Heart left ventricle (tissue), 16 donors: ENCODE measurements at regions of chr18 and their contacts with region 1.

Region 1: DNA sequence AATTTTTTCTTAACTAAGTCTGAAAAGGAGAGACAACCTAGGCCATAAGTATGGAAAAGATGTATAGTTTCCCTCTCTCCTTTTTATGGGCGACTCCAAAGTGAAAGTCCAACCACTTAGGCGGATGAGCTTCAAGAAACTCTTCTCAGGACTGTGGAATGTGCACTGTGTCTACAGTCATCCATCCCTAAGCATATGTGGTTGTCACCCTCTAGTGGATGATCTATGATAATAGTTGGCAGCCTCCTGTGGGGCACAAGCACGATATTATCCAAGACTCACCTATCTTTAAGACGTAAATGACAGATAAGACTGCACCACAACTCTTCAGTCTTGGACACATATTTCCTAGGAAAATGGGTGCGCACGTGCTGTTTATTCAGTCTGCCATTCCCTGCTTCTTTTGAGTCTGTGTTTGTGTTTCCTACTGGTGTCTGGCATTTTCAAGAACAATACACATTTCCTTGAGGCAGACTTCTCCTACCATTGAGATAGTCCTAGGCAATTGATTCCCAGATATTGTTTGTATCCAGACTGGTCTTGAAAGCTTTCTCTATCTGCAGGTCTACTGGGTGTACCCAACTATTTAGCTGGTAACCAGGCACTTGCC is 145.5 kb upstream of the CTAGE1 start:
- DNase-seq: peak in 2 of 5 donors; percentile 50 to 64
- ATAC-seq: peak; percentile 72 to 80 (median 76)
- H3K4me3 ChIP-seq: peak overlapping the region; percentile 10 to 65 (median 54)
- H3K27ac ChIP-seq: peak overlapping the region; percentile 91 to 99 (median 98)
- H3K4me1 ChIP-seq: peaks cover 0 to 24% (median 7%) of the 10 kb centered on the region in 12 donors
- H3K27me3 ChIP-seq: peaks cover 0 to 28% (median 0%) of the 10 kb centered on the region in 9 donors
- CTCF ChIP-seq: peak; percentile 60 to 85 (median 82)
- POLR2A ChIP-seq: peak in 1 of 2 donors; percentile 34

Region 2: DNA sequence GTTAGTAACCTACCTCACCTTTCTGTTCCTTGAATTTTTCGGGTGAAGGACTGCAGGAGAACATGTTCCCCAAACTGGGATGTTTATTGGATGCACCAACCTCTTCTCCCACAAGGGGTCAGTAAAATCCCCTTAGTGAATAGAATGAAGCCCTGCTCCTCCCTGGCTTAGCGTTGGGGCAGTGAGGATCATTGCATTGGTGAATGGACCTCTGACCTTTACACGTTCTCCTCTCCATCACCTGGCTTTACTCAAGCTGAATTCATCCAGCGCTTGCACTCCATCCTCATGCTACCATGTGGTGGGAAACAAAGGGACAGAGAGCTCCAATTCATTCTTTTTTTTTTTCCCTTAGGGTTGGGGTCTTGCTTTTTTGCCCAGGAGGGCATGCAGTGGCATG is 665.4 kb before region 1 on chr18:
- intact Hi-C with region 1: loop called in 3 of 10 experiments (anchors 1 to 5 kb)
- DNase-seq: peak in 3 of 5 donors; percentile 18 to 32 (median 22)
- ATAC-seq: peak; percentile 61 to 82 (median 80)
- H3K4me3 ChIP-seq: no peak overlapping the region
- H3K27ac ChIP-seq: no peak overlapping the region
- H3K4me1 ChIP-seq: peaks cover 0 to 7% (median 0%) of the 10 kb centered on the region in 12 donors
- H3K27me3 ChIP-seq: no peaks in the 10 kb centered on the region
- CTCF ChIP-seq: peak; percentile 59 to 79 (median 68)
- POLR2A ChIP-seq: no peak

Region 3: DNA sequence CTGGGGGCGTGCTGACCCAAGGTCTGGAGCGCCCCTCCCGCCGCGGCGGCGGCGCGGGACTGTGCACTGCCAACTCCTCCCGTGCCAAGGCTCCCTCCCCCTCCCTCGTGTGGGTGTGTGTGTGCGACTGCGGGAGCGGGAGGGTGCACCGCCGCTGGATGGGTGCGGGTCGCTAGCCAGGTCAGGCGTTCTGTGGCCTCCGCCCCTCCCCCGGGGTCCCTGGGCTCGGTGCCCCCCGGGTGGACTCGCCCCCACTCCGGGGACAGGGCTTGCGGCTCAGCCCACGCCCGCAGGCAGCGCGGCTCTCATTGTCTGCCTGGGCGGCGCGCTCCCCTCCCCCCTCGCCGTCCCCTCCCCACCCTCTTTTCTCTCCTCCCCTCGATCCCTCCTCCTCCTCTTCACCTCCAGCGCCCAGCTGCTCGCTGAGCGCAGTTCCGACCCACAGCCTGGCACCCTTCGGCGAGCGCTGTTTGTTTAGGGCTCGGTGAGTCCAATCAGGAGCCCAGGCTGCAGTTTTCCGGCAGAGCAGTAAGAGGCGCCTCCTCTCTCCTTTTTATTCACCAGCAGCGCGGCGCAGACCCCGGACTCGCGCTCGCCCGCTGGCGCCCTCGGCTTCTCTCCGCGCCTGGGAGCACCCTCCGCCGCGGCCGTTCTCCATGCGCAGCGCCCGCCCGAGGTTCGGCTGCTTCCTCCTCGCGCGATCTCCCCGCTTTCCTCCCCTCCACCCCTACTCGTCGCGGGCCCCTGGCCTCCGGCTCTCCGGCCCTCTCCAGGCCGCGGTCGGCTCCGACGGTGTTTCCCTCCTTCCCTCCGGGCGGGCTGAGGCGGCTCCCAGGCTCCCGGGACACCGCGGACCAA is 394.0 kb before region 1 on chr18 and contains the start of gene GATA6:
- intact Hi-C with region 1: loop called in 9 of 10 experiments (anchors 1 to 5 kb)
- DNase-seq: peak; percentile 90 to 96 (median 92)
- ATAC-seq: peak; percentile 74 to 85 (median 76)
- H3K4me3 ChIP-seq: peak within 1 kb of the TSS; percentile 66 to 99 (median 86)
- H3K27ac ChIP-seq: peak within 1 kb of the TSS; percentile 92 to 100 (median 98)
- H3K4me1 ChIP-seq: peaks cover 0 to 40% (median 8%) of the 10 kb centered on the region in 12 donors
- H3K27me3 ChIP-seq: peaks cover 0 to 75% (median 9%) of the 10 kb centered on the region in 9 donors
- CTCF ChIP-seq: peak in 9 of 12 donors; percentile 17 to 64 (median 47)
- POLR2A ChIP-seq: peak; percentile 50 to 91
- total RNA-seq, gene GATA6: 44.9 to 97.7 (median 76.3) TPM

Region 4: DNA sequence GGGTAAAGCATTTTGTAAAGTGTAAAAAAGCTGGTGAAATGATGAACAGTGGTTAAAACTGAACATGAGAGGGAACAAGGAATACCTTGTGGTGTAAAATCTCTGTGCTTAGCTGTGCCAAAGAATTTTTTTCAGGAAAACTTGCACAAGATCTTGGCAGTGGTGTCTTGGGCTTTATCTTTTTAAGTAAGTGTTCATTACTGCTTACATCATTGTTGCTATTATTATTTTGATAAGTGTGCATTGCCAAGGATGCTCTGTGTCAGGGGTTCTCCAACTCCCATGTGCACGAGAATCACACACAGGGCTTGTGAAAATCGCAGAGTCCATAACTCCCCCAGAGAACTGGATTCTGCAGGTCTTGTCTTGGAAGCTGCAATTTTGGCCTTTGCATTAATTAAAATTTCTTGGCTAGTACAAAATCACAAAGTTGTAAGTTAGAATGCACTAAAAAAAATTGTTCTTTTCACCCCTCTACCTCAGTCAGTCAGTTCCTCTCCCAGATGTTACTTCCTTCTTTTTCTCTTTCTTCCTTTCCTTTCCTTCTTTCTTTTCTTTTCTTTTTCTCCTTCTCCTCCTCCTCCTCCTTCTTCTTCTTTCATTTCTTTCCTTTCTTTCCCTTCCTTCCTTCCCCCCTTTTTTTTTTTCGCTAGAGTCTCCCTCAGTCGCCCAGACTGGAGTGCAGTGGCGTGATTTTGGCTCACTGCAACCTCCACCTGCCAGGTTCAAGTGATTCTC is 356.0 kb before region 1 on chr18:
- intact Hi-C with region 1: loop called in 1 of 10 experiments (anchors 10 kb)
- DNase-seq: no peak
- ATAC-seq: peak; percentile 34 to 75 (median 61)
- H3K4me3 ChIP-seq: no peak overlapping the region
- H3K27ac ChIP-seq: peak overlapping the region; percentile 16 to 67 (median 46)
- H3K4me1 ChIP-seq: peaks cover 2 to 74% (median 45%) of the 10 kb centered on the region in 12 donors
- H3K27me3 ChIP-seq: no peaks in the 10 kb centered on the region
- CTCF ChIP-seq: no peak
- POLR2A ChIP-seq: no peak

Region 5: GRCh38 chr18:22348521-22349316 is 214.5 kb before region 1 on chr18:
- intact Hi-C with region 1: loop called in 7 of 10 experiments (anchors 2 to 5 kb)
- DNase-seq: peak; percentile 78 to 87 (median 81)
- ATAC-seq: peak; percentile 54 to 73 (median 70)
- H3K4me3 ChIP-seq: peak overlapping the region; percentile 30 to 65 (median 60)
- H3K27ac ChIP-seq: peak overlapping the region; percentile 84 to 98 (median 92)
- H3K4me1 ChIP-seq: peaks cover 0 to 56% (median 39%) of the 10 kb centered on the region in 12 donors
- H3K27me3 ChIP-seq: peaks cover 0 to 27% (median 0%) of the 10 kb centered on the region in 9 donors
- CTCF ChIP-seq: peak in 1 of 12 donors; percentile 7
- POLR2A ChIP-seq: no peak

Region 6: DNA sequence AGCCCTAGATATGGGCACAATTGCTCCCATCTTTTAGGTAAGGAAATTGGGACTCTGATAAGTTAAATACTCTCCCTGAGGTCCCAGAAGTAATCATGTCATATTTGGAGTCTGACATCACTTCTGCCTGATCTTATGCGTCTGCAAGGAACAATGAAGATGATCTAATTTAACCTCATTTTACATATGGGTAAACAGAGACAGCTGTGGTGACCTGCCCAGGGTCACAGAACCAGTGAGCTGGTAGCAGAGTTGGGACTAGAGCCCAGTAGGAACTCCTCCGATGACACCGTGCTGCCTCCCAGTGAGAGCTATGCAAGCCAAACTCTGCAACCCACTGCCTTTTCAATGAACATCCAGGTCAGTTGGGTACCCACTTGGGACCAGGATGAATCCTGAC is 163.3 kb before region 1 on chr18:
- intact Hi-C with region 1: loop called in 2 of 10 experiments (anchors 5 to 10 kb)
- DNase-seq: peak in 4 of 5 donors; percentile 40 to 53 (median 46)
- ATAC-seq: peak; percentile 77 to 89 (median 86)
- H3K4me3 ChIP-seq: no peak overlapping the region
- H3K27ac ChIP-seq: peak overlapping the region in 5 of 12 donors; percentile 3 to 37 (median 10)
- H3K4me1 ChIP-seq: peaks cover 0 to 26% (median 18%) of the 10 kb centered on the region in 12 donors
- H3K27me3 ChIP-seq: no peaks in the 10 kb centered on the region
- CTCF ChIP-seq: peak in 5 of 12 donors; percentile 11 to 32 (median 25)
- POLR2A ChIP-seq: no peak

Region 7: GRCh38 chr18:22517356-22517755 is 45.8 kb before region 1 on chr18:
- intact Hi-C with region 1: no loop called
- DNase-seq: no peak
- ATAC-seq: peak; percentile 51 to 89 (median 80)
- H3K4me3 ChIP-seq: no peak overlapping the region
- H3K27ac ChIP-seq: peak overlapping the region in 3 of 12 donors; percentile 8 to 59 (median 24)
- H3K4me1 ChIP-seq: peaks cover 0 to 26% (median 9%) of the 10 kb centered on the region in 12 donors
- H3K27me3 ChIP-seq: no peaks in the 10 kb centered on the region
- CTCF ChIP-seq: no peak
- POLR2A ChIP-seq: no peak

Region 8: GRCh38 chr18:22703883-22704585 is 140.8 kb after region 1 on chr18:
- intact Hi-C with region 1: loop called in 2 of 10 experiments (anchors 5 to 10 kb)
- DNase-seq: peak in 1 of 5 donors; percentile 16
- ATAC-seq: peak; percentile 68 to 82 (median 72)
- H3K4me3 ChIP-seq: no peak overlapping the region
- H3K27ac ChIP-seq: no peak overlapping the region
- H3K4me1 ChIP-seq: peaks cover 0 to 12% (median 0%) of the 10 kb centered on the region in 12 donors
- H3K27me3 ChIP-seq: no peaks in the 10 kb centered on the region
- CTCF ChIP-seq: peak; percentile 72 to 95 (median 82)
- POLR2A ChIP-seq: no peak